K562 (cell line): ENCODE measurements at regions of chr2 and their contacts with region 1.

Region 1: DNA sequence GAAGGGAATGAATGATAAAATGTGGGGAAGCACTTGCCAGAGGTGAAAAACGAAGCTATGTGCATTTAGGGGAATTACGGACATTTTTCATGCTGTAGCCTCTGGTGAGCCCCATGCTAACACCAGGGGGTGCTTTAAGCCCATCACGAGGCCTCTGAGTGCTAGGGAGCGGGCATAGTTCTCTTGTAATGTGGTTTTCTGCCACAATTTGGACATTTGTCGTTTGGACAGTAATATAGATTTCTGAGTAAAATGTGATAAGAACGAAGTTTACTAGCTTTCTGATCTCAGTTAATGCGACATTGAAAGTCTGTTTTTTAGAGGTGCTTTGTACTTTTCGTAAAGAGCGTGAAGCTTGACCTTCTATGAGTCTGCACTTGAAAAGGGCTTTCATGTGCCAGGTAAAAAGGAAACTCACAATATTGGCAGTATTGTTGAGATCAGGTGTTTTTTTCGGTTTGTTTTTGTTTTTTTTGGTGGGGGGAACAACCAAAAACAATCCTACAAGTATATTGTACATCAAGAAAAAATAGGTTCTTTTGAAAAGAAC is 50.6 kb downstream of the TRAF3IP1 start:
- DNase-seq: peak; percentile 56 to 78 (median 64)
- ATAC-seq: peak; percentile 98
- H3K4me3 ChIP-seq: no peak overlapping the region
- H3K27ac ChIP-seq: no peak overlapping the region
- H3K4me1 ChIP-seq: peaks cover 4 to 5% of the 10 kb centered on the region in 2 experiments; a peak in 4 of 5 replicates
- H3K27me3 ChIP-seq: no peaks in the 10 kb centered on the region
- CTCF ChIP-seq: peak; percentile 84 to 94 (median 92)
- EP300 ChIP-seq: no peak
- POLR2A ChIP-seq: no peak
- RAD21 ChIP-seq: peak; percentile 85 to 96

Region 2: GRCh38 chr2:237966565-237967462 is 404.1 kb before region 1 on chr2 and contains the start of gene UBE2F:
- CTCF ChIA-PET with region 1: no interaction called
- POLR2A ChIA-PET with region 1: no interaction called
- in situ Hi-C with region 1: no loop called
- intact Hi-C with region 1: no loop called
- DNase-seq: peak; percentile 81 to 95 (median 87)
- ATAC-seq: peak; percentile 91
- H3K4me3 ChIP-seq: peak within 1 kb of the TSS; percentile 79
- H3K27ac ChIP-seq: peak within 1 kb of the TSS; percentile 98
- H3K4me1 ChIP-seq: peaks cover 37 to 41% of the 10 kb centered on the region in 2 experiments
- H3K27me3 ChIP-seq: no peaks in the 10 kb centered on the region
- CTCF ChIP-seq: no peak
- EP300 ChIP-seq: peak; percentile 26; the same call in 1 of the 2 replicates
- POLR2A ChIP-seq: peak; percentile 65
- RAD21 ChIP-seq: no peak
- polyA plus RNA-seq, gene UBE2F: 18.1 to 24.9 TPM

Region 3: GRCh38 chr2:238350150-238350897 is 20.6 kb before region 1 on chr2:
- CTCF ChIA-PET with region 1: no interaction called
- POLR2A ChIA-PET with region 1: no interaction called
- in situ Hi-C with region 1: no loop called
- intact Hi-C with region 1: no loop called
- DNase-seq: peak in 1 of 4 experiments; percentile 1
- ATAC-seq: no peak
- H3K4me3 ChIP-seq: no peak overlapping the region
- H3K27ac ChIP-seq: no peak overlapping the region
- H3K4me1 ChIP-seq: no peaks in the 10 kb centered on the region
- H3K27me3 ChIP-seq: no peaks in the 10 kb centered on the region
- CTCF ChIP-seq: no peak
- EP300 ChIP-seq: no peak
- POLR2A ChIP-seq: no peak
- RAD21 ChIP-seq: no peak

Region 4: GRCh38 chr2:238423561-238424312 is 52.8 kb after region 1 on chr2:
- CTCF ChIA-PET with region 1: no interaction called
- POLR2A ChIA-PET with region 1: no interaction called
- in situ Hi-C with region 1: no loop called
- intact Hi-C with region 1: loop called (anchors 2 kb)
- DNase-seq: peak in 1 of 4 experiments; percentile 49
- ATAC-seq: no peak
- H3K4me3 ChIP-seq: no peak overlapping the region
- H3K27ac ChIP-seq: peak overlapping the region; percentile 35
- H3K4me1 ChIP-seq: peaks cover 67 to 76% of the 10 kb centered on the region in 2 experiments
- H3K27me3 ChIP-seq: no peaks in the 10 kb centered on the region
- CTCF ChIP-seq: no peak
- EP300 ChIP-seq: no peak
- POLR2A ChIP-seq: no peak
- RAD21 ChIP-seq: no peak

Region 5: GRCh38 chr2:238462782-238463396 is 92.0 kb after region 1 on chr2:
- CTCF ChIA-PET with region 1: interaction called, 18 read pairs
- POLR2A ChIA-PET with region 1: interaction called, 4 read pairs
- in situ Hi-C with region 1: loop called (anchors 5 kb)
- intact Hi-C with region 1: loop called (anchors 1 kb)
- DNase-seq: peak; percentile 41 to 57 (median 46)
- ATAC-seq: peak; percentile 88
- H3K4me3 ChIP-seq: no peak overlapping the region
- H3K27ac ChIP-seq: no peak overlapping the region
- H3K4me1 ChIP-seq: no peaks in the 10 kb centered on the region
- H3K27me3 ChIP-seq: peaks cover 0 to 28% of the 10 kb centered on the region in 2 experiments; a peak in 3 of 5 replicates
- CTCF ChIP-seq: peak; percentile 60 to 74 (median 62); a peak in 5 of 6 replicates
- EP300 ChIP-seq: no peak
- POLR2A ChIP-seq: no peak
- RAD21 ChIP-seq: peak; percentile 49 to 85

Region 6: GRCh38 chr2:238515377-238515776 is 144.5 kb after region 1 on chr2:
- CTCF ChIA-PET with region 1: no interaction called
- POLR2A ChIA-PET with region 1: no interaction called
- in situ Hi-C with region 1: no loop called
- intact Hi-C with region 1: loop called (anchors 2 kb)
- DNase-seq: no peak
- ATAC-seq: no peak
- H3K4me3 ChIP-seq: no peak overlapping the region
- H3K27ac ChIP-seq: no peak overlapping the region
- H3K4me1 ChIP-seq: peaks cover 0 to 2% of the 10 kb centered on the region in 2 experiments; a peak in 1 of 5 replicates
- H3K27me3 ChIP-seq: peaks cover 0 to 19% of the 10 kb centered on the region in 2 experiments; a peak in 2 of 5 replicates
- CTCF ChIP-seq: no peak
- EP300 ChIP-seq: no peak
- POLR2A ChIP-seq: no peak
- RAD21 ChIP-seq: no peak

Region 7: GRCh38 chr2:238784671-238785527 is 414.0 kb after region 1 on chr2:
- CTCF ChIA-PET with region 1: no interaction called
- POLR2A ChIA-PET with region 1: no interaction called
- in situ Hi-C with region 1: loop called (anchors 25 kb)
- intact Hi-C with region 1: loop called (anchors 5 kb)
- DNase-seq: peak; percentile 48 to 59 (median 50)
- ATAC-seq: peak; percentile 88
- H3K4me3 ChIP-seq: no peak overlapping the region
- H3K27ac ChIP-seq: no peak overlapping the region
- H3K4me1 ChIP-seq: no peaks in the 10 kb centered on the region
- H3K27me3 ChIP-seq: peaks cover 14 to 46% of the 10 kb centered on the region in 2 experiments; a peak in 4 of 5 replicates
- CTCF ChIP-seq: peak; percentile 75 to 77 (median 76)
- EP300 ChIP-seq: no peak
- POLR2A ChIP-seq: no peak
- RAD21 ChIP-seq: peak; percentile 41 to 67; a peak in 3 of 4 replicates